Activated naive CD8-positive, alpha-beta T cell treated with anti-CD3 and anti-CD28 coated beads, Interleukin-2, amount 10 ng/mL, durations not matched to agents 7 days and 5 days (primary cell): ENCODE measurements at regions of chr20 and their contacts with region 1.

Region 1: DNA sequence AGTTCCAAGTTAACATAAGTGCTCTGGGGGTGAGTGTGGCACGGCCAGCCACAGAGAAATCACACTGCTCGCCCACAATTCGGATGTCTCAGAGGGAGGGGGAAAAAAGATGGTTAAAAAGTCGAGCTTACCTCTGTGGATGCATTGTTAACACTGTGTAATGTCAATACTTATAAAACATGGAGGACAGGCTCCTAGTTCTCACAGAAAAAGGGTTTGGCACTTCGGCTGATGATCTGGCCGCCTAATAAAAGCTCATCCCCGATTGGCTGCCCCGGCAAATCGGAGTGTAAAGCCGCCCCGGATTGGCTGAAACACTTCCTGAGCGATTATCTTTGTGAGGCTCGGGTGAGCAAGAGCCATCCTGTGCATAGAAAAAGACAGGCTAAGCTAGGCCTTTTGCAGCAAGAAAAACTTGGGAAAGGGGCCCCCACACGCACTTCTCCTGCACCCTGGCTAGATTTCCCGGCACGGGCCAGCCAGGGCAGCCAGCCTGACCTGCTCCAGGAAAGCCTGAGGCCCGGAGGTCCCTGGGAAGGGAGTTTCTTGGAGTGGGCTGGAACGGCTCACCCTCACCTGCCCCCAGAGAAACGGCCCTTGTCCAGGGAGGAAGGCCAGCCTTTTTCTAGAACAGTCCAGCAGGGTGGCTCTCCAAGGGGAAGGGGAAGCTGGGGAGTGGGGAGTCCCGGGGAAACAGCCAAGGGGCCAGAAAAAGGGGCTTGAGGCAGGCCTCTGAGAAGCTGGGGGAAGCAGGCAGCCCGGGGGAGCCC is at the start of gene ZMYND8:
- DNase-seq: peak; percentile 99
- ATAC-seq: peak; percentile 81
- H3K4me3 Mint-ChIP-seq: no peak within 1 kb of the TSS
- H3K27ac Mint-ChIP-seq: peak within 1 kb of the TSS; percentile 99
- H3K4me1 Mint-ChIP-seq: peaks cover 50% of the 10 kb centered on the region
- H3K27me3 Mint-ChIP-seq: no peaks in the 10 kb centered on the region
- total RNA-seq, gene ZMYND8: 51.0 to 51.5 TPM

Region 2: DNA sequence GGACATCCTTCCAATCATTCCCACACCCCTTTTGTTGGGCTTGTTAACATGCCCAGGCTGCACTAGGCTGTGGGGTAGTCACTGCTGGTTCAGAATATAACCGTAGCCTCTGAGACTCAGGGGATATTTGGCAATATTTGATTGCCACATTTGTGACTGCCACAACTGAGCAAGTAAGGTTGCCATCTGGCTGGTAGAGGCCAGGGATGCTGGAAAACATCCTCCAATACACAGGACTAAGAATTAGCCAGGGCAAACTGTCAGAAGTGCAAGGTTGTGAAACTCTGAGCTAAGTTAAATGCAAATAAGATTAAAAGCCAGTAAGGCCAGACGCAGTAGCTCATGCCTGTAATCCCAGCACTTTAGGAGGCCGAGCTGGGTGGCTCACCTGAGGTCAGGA is 112.3 kb before region 1 on chr20:
- POLR2A ChIA-PET with region 1: no interaction called
- DNase-seq: no peak
- ATAC-seq: no peak
- H3K4me3 Mint-ChIP-seq: no peak overlapping the region
- H3K27ac Mint-ChIP-seq: no peak overlapping the region
- H3K4me1 Mint-ChIP-seq: peaks cover 2% of the 10 kb centered on the region
- H3K27me3 Mint-ChIP-seq: no peaks in the 10 kb centered on the region

Region 3: DNA sequence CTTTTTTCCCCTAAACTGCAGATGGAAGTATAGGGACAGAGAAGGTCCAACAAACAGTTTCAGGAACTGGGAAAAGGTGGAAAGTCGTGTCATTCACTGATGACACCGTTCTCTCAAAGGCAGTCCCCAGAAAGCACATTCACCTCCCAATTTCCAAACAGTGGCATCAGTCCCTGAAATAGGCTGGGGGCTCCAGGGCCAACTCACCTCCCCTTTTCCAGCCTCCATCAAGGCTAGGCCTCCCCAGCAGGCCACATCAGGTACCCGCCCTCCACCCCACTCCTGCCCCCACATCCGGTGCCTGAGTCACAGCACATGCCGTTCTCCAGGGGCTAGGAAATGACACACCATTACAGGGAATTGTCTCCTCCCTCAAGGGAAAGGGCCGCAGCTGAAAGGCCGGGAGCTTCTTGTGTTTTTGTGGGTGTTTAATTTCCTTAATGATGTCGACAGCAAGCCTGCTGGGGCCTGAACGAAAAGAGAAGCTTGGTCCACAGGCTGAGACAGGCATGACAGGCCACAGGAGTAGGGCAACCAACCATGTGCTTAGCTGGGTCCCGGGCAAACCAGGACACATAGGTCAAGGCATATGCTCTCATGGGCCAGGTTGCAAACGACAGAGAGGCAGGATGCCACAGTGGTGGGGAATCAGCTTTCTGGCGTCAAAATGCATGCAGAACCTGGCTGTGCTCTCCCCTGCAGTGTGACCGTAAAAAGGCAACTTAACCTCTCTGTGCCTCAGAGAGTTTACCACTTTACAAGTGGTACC is 39.4 kb before region 1 on chr20:
- POLR2A ChIA-PET with region 1: interaction called, 21 read pairs
- DNase-seq: peak; percentile 52
- ATAC-seq: peak; percentile 74
- H3K4me3 Mint-ChIP-seq: peak overlapping the region; percentile 72
- H3K27ac Mint-ChIP-seq: peak overlapping the region; percentile 61
- H3K4me1 Mint-ChIP-seq: peaks cover 51% of the 10 kb centered on the region
- H3K27me3 Mint-ChIP-seq: no peaks in the 10 kb centered on the region

Region 4: DNA sequence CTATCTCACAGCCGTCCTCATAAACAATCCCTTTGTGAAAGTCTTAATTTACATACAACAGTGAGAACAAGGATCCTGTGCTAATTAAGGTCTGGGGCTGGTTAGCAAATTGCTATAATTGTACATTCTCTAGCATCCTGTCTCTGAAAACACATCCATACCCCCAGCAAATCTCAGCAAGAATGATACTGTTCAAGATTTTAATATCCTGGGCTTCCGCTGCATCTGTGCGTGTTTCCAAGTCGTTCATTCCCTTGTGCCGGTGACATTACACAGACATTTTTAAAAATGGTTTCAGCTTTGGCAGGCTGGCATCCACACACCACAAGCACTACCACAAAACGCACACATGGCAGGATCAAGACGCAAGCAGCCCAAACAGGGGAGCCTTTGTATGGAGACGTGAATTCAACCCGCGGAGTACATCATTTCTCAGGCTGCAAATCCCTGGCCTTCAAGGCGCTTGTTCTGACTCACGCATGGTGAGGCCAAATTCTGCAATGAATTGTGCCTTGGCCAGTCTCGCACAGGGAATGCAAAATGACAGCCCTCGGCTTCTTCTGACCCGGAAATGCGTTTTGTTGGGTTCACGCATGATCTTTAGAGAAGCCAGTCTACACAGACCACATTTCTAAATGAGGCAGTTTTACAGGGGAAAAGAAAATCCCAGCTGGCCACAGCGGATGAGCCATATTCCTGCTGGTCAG is 20.4 kb before region 1 on chr20:
- POLR2A ChIA-PET with region 1: no interaction called
- DNase-seq: no peak
- ATAC-seq: no peak
- H3K4me3 Mint-ChIP-seq: no peak overlapping the region
- H3K27ac Mint-ChIP-seq: no peak overlapping the region
- H3K4me1 Mint-ChIP-seq: peaks cover 32% of the 10 kb centered on the region
- H3K27me3 Mint-ChIP-seq: no peaks in the 10 kb centered on the region

Region 5: GRCh38 chr20:47379433-47380150 is 22.9 kb after region 1 on chr20:
- POLR2A ChIA-PET with region 1: interaction called, 27 read pairs
- DNase-seq: no peak
- ATAC-seq: no peak
- H3K4me3 Mint-ChIP-seq: no peak overlapping the region
- H3K27ac Mint-ChIP-seq: peak overlapping the region; percentile 79
- H3K4me1 Mint-ChIP-seq: peaks cover 24% of the 10 kb centered on the region
- H3K27me3 Mint-ChIP-seq: no peaks in the 10 kb centered on the region

Region 6: GRCh38 chr20:47397652-47398301 is 41.1 kb after region 1 on chr20:
- POLR2A ChIA-PET with region 1: interaction called, 11 read pairs
- DNase-seq: no peak
- ATAC-seq: peak; percentile 52
- H3K4me3 Mint-ChIP-seq: peak overlapping the region; percentile 73
- H3K27ac Mint-ChIP-seq: peak overlapping the region; percentile 75
- H3K4me1 Mint-ChIP-seq: peaks cover 15% of the 10 kb centered on the region
- H3K27me3 Mint-ChIP-seq: no peaks in the 10 kb centered on the region

Region 7: DNA sequence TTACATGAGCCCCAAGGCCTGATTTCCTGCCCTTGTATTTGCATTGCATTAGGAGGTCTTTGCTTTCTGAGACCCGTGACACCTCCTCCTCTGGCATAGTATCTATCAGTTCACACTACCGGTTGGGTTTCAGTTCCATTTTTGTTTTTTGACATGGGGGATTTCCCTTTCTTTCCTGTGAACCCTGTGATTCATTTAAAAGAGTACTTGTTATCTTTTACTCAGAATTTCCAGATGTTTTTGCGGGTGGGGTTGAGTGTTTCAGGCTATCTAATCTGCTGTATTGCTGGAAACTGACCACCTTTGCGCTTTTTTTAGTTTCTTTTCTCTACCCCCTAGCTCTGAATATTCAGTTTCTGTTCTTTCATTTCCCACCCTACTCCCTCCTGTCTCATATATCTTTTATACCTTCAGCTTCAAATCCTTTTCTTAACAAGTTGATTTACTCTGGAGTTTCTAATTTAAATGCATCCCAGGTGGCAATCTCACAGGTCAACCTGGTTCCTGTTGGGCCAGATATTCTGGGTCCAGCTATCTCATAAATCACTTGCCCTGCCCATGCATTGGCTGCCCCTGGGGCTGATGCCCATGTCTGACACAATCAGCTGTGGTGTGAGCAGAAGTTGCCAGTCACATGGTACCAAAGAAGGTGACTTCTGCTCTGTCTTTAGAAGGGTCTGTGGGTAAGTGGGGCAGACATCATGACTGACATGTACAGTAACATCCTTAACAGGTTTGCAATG is 130.6 kb after region 1 on chr20:
- POLR2A ChIA-PET with region 1: interaction called, 12 read pairs
- DNase-seq: peak; percentile 55
- ATAC-seq: peak; percentile 90
- H3K4me3 Mint-ChIP-seq: peak overlapping the region; percentile 63
- H3K27ac Mint-ChIP-seq: peak overlapping the region; percentile 97
- H3K4me1 Mint-ChIP-seq: peaks cover 35% of the 10 kb centered on the region
- H3K27me3 Mint-ChIP-seq: no peaks in the 10 kb centered on the region

Region 8: GRCh38 chr20:47501483-47502270 is 145.0 kb after region 1 on chr20 and contains the start of gene NCOA3:
- POLR2A ChIA-PET with region 1: interaction called, 18 read pairs
- DNase-seq: peak; percentile 97
- ATAC-seq: peak; percentile 87
- H3K4me3 Mint-ChIP-seq: peak within 1 kb of the TSS; percentile 99
- H3K27ac Mint-ChIP-seq: peak within 1 kb of the TSS; percentile 99
- H3K4me1 Mint-ChIP-seq: peaks cover 32% of the 10 kb centered on the region
- H3K27me3 Mint-ChIP-seq: no peaks in the 10 kb centered on the region
- total RNA-seq, gene NCOA3: 71.3 to 74.2 TPM